Transverse colon (tissue), 4 donors: ENCODE measurements at regions of chr10 and their contacts with region 1.

Region 1: DNA sequence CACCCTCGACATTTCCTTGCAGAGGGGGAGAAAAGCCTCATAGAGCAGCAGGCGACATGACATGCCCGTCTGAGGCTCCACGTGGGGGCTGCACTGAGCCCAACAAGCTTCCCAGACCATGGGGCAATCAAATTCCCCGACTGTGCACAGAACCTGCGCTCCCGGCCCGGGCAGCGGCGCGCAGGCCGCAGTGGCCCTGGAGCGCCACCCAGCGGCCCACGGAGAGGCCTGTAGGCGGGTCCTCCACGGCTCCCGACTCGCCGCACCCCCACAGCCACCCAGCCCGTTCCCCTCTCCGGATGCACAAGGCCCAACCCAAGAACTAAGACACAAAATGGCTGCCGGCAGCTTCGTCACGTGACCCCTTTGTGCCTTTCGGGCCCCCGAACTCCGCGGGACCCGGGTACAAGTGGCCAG is 816 bp downstream of the EPC1 start:
- DNase-seq: peak; percentile 97
- H3K4me3 ChIP-seq: peak overlapping the region; percentile 68 to 89 (median 84)
- H3K27ac ChIP-seq: peak overlapping the region; percentile 95 to 100 (median 100)
- H3K4me1 ChIP-seq: peaks cover 33 to 75% (median 50%) of the 10 kb centered on the region in 4 donors
- H3K27me3 ChIP-seq: no peaks in the 10 kb centered on the region
- CTCF ChIP-seq: peak; percentile 91 to 98 (median 95)
- EP300 ChIP-seq: no peak
- POLR2A ChIP-seq: no peak

Region 2: GRCh38 chr10:31759799-31760626 is 586.1 kb before region 1 on chr10:
- in situ Hi-C with region 1: no loop called
- intact Hi-C with region 1: no loop called
- DNase-seq: peak; percentile 96
- H3K4me3 ChIP-seq: peak overlapping the region; percentile 51 to 84 (median 70)
- H3K27ac ChIP-seq: peak overlapping the region; percentile 92 to 99 (median 96)
- H3K4me1 ChIP-seq: peaks cover 10 to 23% (median 17%) of the 10 kb centered on the region in 4 donors
- H3K27me3 ChIP-seq: no peaks in the 10 kb centered on the region
- CTCF ChIP-seq: no peak
- EP300 ChIP-seq: no peak
- POLR2A ChIP-seq: peak; percentile 94

Region 3: GRCh38 chr10:31782701-31783100 is 563.4 kb before region 1 on chr10:
- in situ Hi-C with region 1: no loop called
- intact Hi-C with region 1: no loop called
- DNase-seq: no peak
- H3K4me3 ChIP-seq: no peak overlapping the region
- H3K27ac ChIP-seq: no peak overlapping the region
- H3K4me1 ChIP-seq: no peaks in the 10 kb centered on the region
- H3K27me3 ChIP-seq: no peaks in the 10 kb centered on the region
- CTCF ChIP-seq: no peak
- EP300 ChIP-seq: no peak
- POLR2A ChIP-seq: no peak

Region 4: GRCh38 chr10:32055813-32056600 is 290.1 kb before region 1 on chr10 and contains the start of gene KIF5B:
- in situ Hi-C with region 1: loop called in 1 of 4 experiments (anchors 10 kb)
- intact Hi-C with region 1: loop called (anchors 10 kb)
- DNase-seq: peak; percentile 91
- H3K4me3 ChIP-seq: peak within 1 kb of the TSS; percentile 69 to 89 (median 83)
- H3K27ac ChIP-seq: peak within 1 kb of the TSS; percentile 96 to 98 (median 96)
- H3K4me1 ChIP-seq: peaks cover 4 to 48% (median 32%) of the 10 kb centered on the region in 4 donors
- H3K27me3 ChIP-seq: no peaks in the 10 kb centered on the region
- CTCF ChIP-seq: no peak
- EP300 ChIP-seq: no peak
- POLR2A ChIP-seq: peak; percentile 99
- total RNA-seq, gene KIF5B: 77.1 to 166 (median 135) TPM

Region 5: GRCh38 chr10:32256613-32257437 is 89.3 kb before region 1 on chr10:
- in situ Hi-C with region 1: loop called (anchors 5 to 25 kb)
- intact Hi-C with region 1: loop called (anchors 5 kb)
- DNase-seq: peak; percentile 76
- H3K4me3 ChIP-seq: no peak overlapping the region
- H3K27ac ChIP-seq: no peak overlapping the region
- H3K4me1 ChIP-seq: peaks cover 0 to 4% (median 0%) of the 10 kb centered on the region in 4 donors
- H3K27me3 ChIP-seq: no peaks in the 10 kb centered on the region
- CTCF ChIP-seq: peak; percentile 85 to 89 (median 87)
- EP300 ChIP-seq: no peak
- POLR2A ChIP-seq: no peak

Region 6: DNA sequence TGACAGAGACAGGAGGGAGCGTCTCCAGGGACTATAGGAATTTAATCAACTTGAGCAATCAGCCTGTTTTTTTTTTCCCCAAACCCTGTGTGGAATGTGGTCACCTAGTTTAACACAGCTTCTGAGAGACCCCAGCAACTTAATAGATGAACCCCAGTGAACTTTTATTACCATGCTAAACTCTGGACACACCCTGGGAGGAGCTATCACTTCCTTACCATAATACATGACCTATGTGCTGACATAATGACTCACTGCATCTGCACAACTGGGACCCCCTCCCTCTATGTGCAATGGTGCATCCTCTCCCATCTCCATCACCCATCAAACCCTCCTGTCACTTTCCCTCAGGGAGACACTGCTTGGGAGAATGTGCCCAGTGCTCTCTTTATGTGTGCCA is 82.8 kb before region 1 on chr10:
- in situ Hi-C with region 1: loop called (anchors 5 to 25 kb)
- intact Hi-C with region 1: loop called (anchors 5 kb)
- DNase-seq: no peak
- H3K4me3 ChIP-seq: no peak overlapping the region
- H3K27ac ChIP-seq: no peak overlapping the region
- H3K4me1 ChIP-seq: no peaks in the 10 kb centered on the region
- H3K27me3 ChIP-seq: no peaks in the 10 kb centered on the region
- CTCF ChIP-seq: no peak
- EP300 ChIP-seq: no peak
- POLR2A ChIP-seq: no peak

Region 7: GRCh38 chr10:32413513-32413912 is 67.4 kb after region 1 on chr10:
- in situ Hi-C with region 1: no loop called
- intact Hi-C with region 1: no loop called
- DNase-seq: no peak
- H3K4me3 ChIP-seq: no peak overlapping the region
- H3K27ac ChIP-seq: peak overlapping the region; percentile 5 to 58 (median 44)
- H3K4me1 ChIP-seq: peaks cover 0 to 25% (median 4%) of the 10 kb centered on the region in 4 donors
- H3K27me3 ChIP-seq: no peaks in the 10 kb centered on the region
- CTCF ChIP-seq: no peak
- EP300 ChIP-seq: no peak
- POLR2A ChIP-seq: no peak